H1 (cell line): ENCODE measurements at regions of chr20 and their contacts with region 1.

Region 1: GRCh38 chr20:49888345-49888966 is 26.9 kb downstream of the SPATA2 start:
- DNase-seq: peak; percentile 76 to 94
- H3K4me3 ChIP-seq: no peak overlapping the region
- H3K27ac ChIP-seq: no peak overlapping the region
- H3K4me1 ChIP-seq: peaks cover 0 to 19% (median 11%) of the 10 kb centered on the region in 4 experiments; a peak in 5 of 7 replicates
- H3K27me3 ChIP-seq: no peaks in the 10 kb centered on the region
- CTCF ChIP-seq: peak; percentile 70 to 91 (median 88)
- EP300 ChIP-seq: no peak
- POLR2A ChIP-seq: no peak
- RAD21 ChIP-seq: peak; percentile 92

Region 2: GRCh38 chr20:49541733-49542513 is 346.5 kb before region 1 on chr20:
- CTCF ChIA-PET with region 1: interaction called, 69 read pairs
- POLR2A ChIA-PET with region 1: no interaction called
- DNase-seq: peak in 1 of 2 experiments; percentile 86
- H3K4me3 ChIP-seq: no peak overlapping the region
- H3K27ac ChIP-seq: no peak overlapping the region
- H3K4me1 ChIP-seq: no peaks in the 10 kb centered on the region
- H3K27me3 ChIP-seq: no peaks in the 10 kb centered on the region
- CTCF ChIP-seq: peak; percentile 60 to 99 (median 90)
- EP300 ChIP-seq: no peak
- POLR2A ChIP-seq: no peak
- RAD21 ChIP-seq: peak; percentile 93 to 94

Region 3: DNA sequence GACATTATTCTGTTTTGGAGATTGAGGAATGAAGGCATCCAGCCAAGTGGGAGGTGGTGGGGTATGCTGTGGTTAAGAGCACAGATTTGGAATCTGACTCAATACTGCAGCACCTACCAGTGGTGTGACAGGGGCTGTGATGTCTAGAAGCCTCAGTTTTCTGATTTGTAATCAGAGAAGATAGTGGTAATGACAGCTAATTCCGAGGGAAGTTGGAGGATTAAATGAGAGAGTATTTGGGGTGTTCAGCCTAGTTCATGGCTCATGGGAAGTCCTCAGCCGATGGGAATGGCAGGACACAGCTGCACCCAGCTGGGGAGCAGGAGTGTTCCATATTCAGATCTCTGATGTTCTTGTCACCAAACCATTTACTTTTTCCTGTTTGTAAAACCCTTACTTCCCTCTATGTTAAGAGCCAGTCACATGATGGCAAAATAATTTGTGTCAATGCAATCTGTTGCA is 66.6 kb before region 1 on chr20:
- CTCF ChIA-PET with region 1: interaction called, 20 read pairs
- POLR2A ChIA-PET with region 1: no interaction called
- DNase-seq: no peak
- H3K4me3 ChIP-seq: no peak overlapping the region
- H3K27ac ChIP-seq: no peak overlapping the region
- H3K4me1 ChIP-seq: no peaks in the 10 kb centered on the region
- H3K27me3 ChIP-seq: no peaks in the 10 kb centered on the region
- CTCF ChIP-seq: peak in 1 of 3 experiments; percentile 15; a peak in 1 of 4 replicates
- EP300 ChIP-seq: no peak
- POLR2A ChIP-seq: no peak
- RAD21 ChIP-seq: peak; percentile 33 to 41; a peak in 3 of 4 replicates

Region 4: DNA sequence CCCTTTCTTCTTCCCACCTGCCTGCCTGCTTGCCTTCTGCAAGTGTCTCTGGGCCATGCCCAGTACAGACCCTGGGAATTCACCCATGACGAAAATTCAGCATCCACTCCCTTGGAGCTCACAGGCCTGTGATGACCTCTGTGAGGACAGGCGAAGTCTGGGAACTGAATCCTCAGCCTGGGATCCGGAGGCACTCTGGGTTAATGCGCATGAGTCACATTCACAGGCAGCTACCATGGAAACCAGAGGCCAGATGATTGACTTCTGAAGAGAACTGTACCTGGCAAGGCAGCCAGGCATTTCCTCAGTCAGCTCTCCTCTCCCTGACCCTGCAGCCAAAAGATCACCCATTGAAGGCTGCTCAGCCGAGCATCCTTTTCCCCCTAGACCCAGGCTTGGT is 34.8 kb before region 1 on chr20:
- CTCF ChIA-PET with region 1: interaction called, 72 read pairs
- POLR2A ChIA-PET with region 1: no interaction called
- DNase-seq: no peak
- H3K4me3 ChIP-seq: no peak overlapping the region
- H3K27ac ChIP-seq: no peak overlapping the region
- H3K4me1 ChIP-seq: peaks cover 3 to 13% (median 7%) of the 10 kb centered on the region in 4 experiments; a peak in 6 of 7 replicates
- H3K27me3 ChIP-seq: no peaks in the 10 kb centered on the region
- CTCF ChIP-seq: no peak
- EP300 ChIP-seq: no peak
- POLR2A ChIP-seq: no peak
- RAD21 ChIP-seq: no peak

Region 5: DNA sequence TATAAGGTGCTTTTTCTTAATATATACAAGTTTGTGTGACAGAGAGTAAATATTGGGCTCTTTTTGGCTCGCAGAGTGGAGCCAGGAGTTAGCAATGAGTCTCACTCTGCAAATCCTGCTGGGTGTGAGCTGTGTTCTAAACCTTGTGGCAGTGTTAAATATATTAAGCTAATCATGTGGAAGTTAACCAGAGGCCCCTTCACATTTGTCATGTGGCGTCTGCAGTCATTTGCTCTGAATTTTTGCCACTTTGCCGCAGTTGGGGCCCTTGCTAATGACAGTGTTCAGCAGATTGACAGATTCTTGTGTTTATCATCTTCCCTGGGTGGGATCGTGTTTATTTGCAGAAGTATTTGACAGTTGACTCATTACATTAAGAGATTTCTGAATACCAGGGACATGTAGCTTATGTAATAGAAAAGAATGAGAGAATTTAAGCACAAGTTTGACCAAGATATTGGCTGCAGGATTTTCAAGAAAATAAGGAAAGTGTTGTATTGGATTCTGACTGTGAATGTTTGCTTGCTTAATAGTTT is 11.0 kb before region 1 on chr20:
- CTCF ChIA-PET with region 1: interaction called, 21 read pairs
- POLR2A ChIA-PET with region 1: no interaction called
- DNase-seq: no peak
- H3K4me3 ChIP-seq: no peak overlapping the region
- H3K27ac ChIP-seq: no peak overlapping the region
- H3K4me1 ChIP-seq: no peaks in the 10 kb centered on the region
- H3K27me3 ChIP-seq: no peaks in the 10 kb centered on the region; a peak in 1 of 7 replicates
- CTCF ChIP-seq: no peak
- EP300 ChIP-seq: no peak
- POLR2A ChIP-seq: no peak
- RAD21 ChIP-seq: no peak

Region 6: DNA sequence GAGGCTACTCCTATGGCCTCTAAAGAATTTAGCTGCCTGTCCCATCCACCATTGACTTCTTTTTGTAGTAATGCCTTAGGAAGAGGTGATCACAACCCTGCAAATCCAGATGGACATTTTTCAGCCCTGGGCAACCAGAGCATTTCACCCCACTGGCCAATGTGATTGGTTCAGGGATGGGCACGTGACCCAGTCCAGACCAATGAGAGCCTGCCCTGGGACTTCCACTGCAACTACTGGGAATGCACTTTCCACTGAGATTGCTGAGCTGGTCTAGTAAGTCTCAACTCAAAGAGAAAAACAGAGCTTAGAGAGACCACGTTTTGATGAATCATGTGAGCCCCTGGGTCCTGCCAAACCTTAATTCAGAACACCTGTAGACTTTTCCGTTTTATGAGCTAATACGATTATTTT is 233.4 kb after region 1 on chr20:
- CTCF ChIA-PET with region 1: no interaction called
- POLR2A ChIA-PET with region 1: no interaction called
- DNase-seq: no peak
- H3K4me3 ChIP-seq: no peak overlapping the region
- H3K27ac ChIP-seq: no peak overlapping the region
- H3K4me1 ChIP-seq: peaks cover 0 to 2% (median 0%) of the 10 kb centered on the region in 4 experiments; a peak in 2 of 7 replicates
- H3K27me3 ChIP-seq: no peaks in the 10 kb centered on the region
- CTCF ChIP-seq: no peak
- EP300 ChIP-seq: no peak
- POLR2A ChIP-seq: no peak
- RAD21 ChIP-seq: no peak